IMR-90 (cell line): ENCODE measurements at regions of chr4 and their contacts with region 1.

Region 1: DNA sequence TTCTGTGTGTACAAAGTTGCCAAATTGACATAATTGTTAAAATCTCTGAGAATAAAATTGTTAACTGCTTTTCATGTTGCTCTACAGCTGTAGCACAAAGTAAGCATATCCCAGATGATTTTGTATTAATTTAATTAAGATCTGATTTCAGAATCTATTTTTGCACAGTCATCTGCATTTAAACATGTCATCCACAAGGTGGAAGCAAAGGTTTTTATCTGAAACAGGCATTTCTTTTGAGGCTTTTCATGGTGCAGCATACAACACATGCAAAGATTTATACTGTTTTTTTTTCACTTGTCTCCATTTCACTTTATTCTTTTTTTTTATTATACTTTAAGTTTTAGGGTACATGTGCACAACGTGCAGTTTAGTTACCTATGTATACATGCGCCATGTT is 51.2 kb downstream of the GC start:
- DNase-seq: peak; percentile 58
- ATAC-seq: peak; percentile 72
- H3K4me3 ChIP-seq: no peak overlapping the region
- H3K27ac ChIP-seq: no peak overlapping the region
- H3K4me1 ChIP-seq: no peaks in the 10 kb centered on the region
- H3K27me3 ChIP-seq: 0 out of 2 replicates have a peak, but pooled peaks cover 2% of the 10 kb centered on the region
- CTCF ChIP-seq: peak; percentile 60
- POLR2A ChIP-seq: no peak
- RAD21 ChIP-seq: peak; percentile 48

Region 2: DNA sequence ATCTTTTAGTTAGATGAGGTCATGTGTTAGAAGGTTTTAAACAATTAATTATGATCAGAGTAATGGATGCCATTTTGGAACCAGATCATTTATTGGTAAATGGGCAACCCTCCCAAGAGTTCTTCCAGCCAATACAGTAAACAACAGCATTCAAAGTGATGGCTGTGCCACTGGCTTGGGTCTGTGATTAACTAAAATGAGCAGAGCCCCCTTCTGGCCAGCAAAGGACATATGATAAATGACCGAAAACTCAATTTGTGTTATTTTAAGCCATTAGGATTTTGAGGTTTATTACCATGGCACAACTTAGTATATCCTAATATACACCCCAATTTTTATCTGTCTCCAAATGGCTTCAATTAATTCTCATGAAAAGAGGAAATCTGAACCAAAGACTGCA is 208.3 kb after region 1 on chr4:
- CTCF ChIA-PET with region 1: no interaction called
- POLR2A ChIA-PET with region 1: no interaction called
- dilution Hi-C with region 1: no loop called
- in situ Hi-C with region 1: no loop called
- intact Hi-C with region 1: loop called (anchors 1 kb)
- DNase-seq: peak; percentile 0
- ATAC-seq: no peak
- H3K4me3 ChIP-seq: no peak overlapping the region
- H3K27ac ChIP-seq: no peak overlapping the region
- H3K4me1 ChIP-seq: no peaks in the 10 kb centered on the region
- H3K27me3 ChIP-seq: no peaks in the 10 kb centered on the region
- CTCF ChIP-seq: peak; percentile 28; the same call in 1 of the 2 replicates
- POLR2A ChIP-seq: no peak
- RAD21 ChIP-seq: no peak

Region 3: GRCh38 chr4:72286185-72286584 is 553.5 kb after region 1 on chr4:
- CTCF ChIA-PET with region 1: no interaction called
- POLR2A ChIA-PET with region 1: no interaction called
- dilution Hi-C with region 1: no loop called
- in situ Hi-C with region 1: no loop called
- intact Hi-C with region 1: loop called (anchors 2 kb)
- DNase-seq: peak; percentile 12
- ATAC-seq: peak; percentile 46; the same call in 1 of the 2 replicates
- H3K4me3 ChIP-seq: no peak overlapping the region
- H3K27ac ChIP-seq: no peak overlapping the region
- H3K4me1 ChIP-seq: no peaks in the 10 kb centered on the region
- H3K27me3 ChIP-seq: no peaks in the 10 kb centered on the region
- CTCF ChIP-seq: peak; percentile 27
- POLR2A ChIP-seq: no peak
- RAD21 ChIP-seq: no peak

Region 4: GRCh38 chr4:72302981-72303704 is 570.4 kb after region 1 on chr4:
- CTCF ChIA-PET with region 1: no interaction called
- POLR2A ChIA-PET with region 1: no interaction called
- dilution Hi-C with region 1: no loop called
- in situ Hi-C with region 1: no loop called
- intact Hi-C with region 1: loop called (anchors 5 kb)
- DNase-seq: peak; percentile 35
- ATAC-seq: peak; percentile 85
- H3K4me3 ChIP-seq: no peak overlapping the region
- H3K27ac ChIP-seq: no peak overlapping the region
- H3K4me1 ChIP-seq: no peaks in the 10 kb centered on the region
- H3K27me3 ChIP-seq: no peaks in the 10 kb centered on the region
- CTCF ChIP-seq: peak; percentile 61
- POLR2A ChIP-seq: no peak
- RAD21 ChIP-seq: peak; percentile 38